Caco-2 (cell line): ENCODE measurements at regions of chr5 and their contacts with region 1.

Region 1: DNA sequence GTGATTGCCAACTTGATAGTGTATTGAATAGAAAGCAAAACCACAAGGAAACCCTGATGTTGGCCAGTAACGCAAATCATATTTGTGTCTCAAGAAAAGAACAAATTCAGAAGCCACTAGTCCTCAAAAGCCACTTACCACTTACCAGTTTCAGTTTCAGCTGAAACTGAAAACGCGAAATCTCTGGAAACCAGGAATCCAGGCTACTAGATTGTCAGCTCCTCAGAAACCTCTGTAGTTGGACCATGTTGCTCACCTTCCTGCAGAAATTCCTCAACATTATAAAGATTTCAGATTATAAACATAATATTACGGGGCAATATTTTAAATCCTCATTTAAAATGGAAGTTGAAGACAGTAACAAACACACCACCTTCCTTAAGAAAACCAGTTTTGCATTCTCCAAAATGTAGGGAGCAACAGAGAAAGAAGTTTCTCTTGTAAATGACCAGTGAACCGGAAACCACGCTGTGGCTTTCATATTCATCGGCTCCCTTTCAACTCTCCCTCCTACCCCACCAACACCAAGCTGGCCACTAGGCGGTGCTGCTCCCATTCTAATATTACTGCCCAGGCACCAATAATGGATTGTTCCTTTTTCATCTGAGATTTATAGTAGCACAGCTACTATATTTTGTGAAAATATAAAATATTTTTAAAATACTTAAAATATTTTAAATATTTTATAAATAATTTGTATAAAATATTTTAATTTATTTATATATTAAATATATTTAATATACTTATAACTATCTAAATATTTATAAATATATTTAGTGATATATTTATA is 8.7 kb upstream of the TMED7 start:
- DNase-seq: peak; percentile 83 to 86
- H3K4me3 ChIP-seq: 0 out of 2 replicates have a peak overlapping the region, but pooled peaks have one; percentile 2
- H3K4me3 Mint-ChIP-seq: peak overlapping the region; percentile 59
- H3K27ac Mint-ChIP-seq: no peak overlapping the region
- H3K4me1 ChIP-seq: no peaks in the 10 kb centered on the region
- H3K4me1 Mint-ChIP-seq: no peaks in the 10 kb centered on the region
- H3K27me3 ChIP-seq: no peaks in the 10 kb centered on the region; the same call in 1 of the 2 replicates
- H3K27me3 Mint-ChIP-seq: peaks cover 8% of the 10 kb centered on the region
- CTCF ChIP-seq: peak; percentile 92 to 94

Region 2: DNA sequence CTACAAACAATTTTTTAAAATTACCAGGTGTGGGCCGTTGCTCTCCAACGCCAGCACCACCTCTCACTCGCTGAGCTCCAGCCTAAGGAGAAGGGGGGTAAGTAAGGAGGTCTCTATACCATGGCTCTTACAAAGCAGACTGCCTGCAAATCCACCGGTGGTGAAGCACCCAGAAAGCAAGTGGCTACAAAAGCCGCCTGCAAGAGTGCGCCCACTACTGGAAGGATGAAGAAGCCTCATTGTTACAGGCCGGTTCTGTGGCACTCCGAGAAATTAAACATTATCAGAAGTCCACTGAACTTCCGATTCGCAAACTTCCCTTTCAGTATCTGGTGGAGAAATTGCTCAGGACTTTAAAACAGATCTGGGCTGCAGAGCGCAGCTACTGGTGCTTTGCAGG is 135.9 kb after region 1 on chr5:
- CTCF ChIA-PET with region 1: no interaction called
- POLR2A ChIA-PET with region 1: no interaction called
- intact Hi-C with region 1: loop called (anchors 2 kb)
- DNase-seq: peak in 1 of 2 experiments; percentile 4
- H3K4me3 ChIP-seq: no peak overlapping the region
- H3K4me3 Mint-ChIP-seq: no peak overlapping the region
- H3K27ac Mint-ChIP-seq: no peak overlapping the region
- H3K4me1 ChIP-seq: no peaks in the 10 kb centered on the region
- H3K4me1 Mint-ChIP-seq: no peaks in the 10 kb centered on the region
- H3K27me3 ChIP-seq: no peaks in the 10 kb centered on the region
- H3K27me3 Mint-ChIP-seq: peaks cover 4% of the 10 kb centered on the region
- CTCF ChIP-seq: peak in 1 of 2 experiments; percentile 52

Region 3: DNA sequence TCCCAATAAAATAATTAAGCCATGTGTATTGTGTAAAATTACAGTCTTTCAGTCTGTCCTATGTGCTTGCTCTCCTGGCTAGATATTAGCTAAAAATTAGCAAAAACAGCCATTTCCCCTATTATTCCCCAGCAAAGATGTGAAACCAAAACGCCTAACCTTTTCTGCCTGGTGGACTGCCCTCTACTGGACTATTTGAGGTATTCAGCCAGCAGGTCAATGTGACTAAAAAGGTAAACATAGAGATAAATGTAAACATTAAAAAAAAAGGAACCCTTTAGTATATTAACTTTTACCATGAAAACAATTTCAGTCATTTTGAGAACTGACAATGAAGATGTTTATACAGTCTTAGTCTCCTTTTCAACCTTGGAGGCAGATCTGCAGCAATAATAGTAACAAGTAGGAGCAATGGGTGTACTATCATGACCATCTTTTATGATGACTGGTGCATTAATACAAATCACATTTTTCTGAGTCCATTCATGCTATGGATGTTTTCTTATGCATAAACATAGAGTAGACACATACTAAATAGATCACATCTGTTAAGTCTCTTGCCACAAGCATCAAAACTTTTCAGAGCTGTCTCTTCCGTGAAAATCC is 196.7 kb after region 1 on chr5:
- CTCF ChIA-PET with region 1: interaction called, 7 read pairs
- POLR2A ChIA-PET with region 1: no interaction called
- intact Hi-C with region 1: loop called (anchors 1 kb)
- DNase-seq: peak in 1 of 2 experiments; percentile 51
- H3K4me3 ChIP-seq: no peak overlapping the region
- H3K4me3 Mint-ChIP-seq: no peak overlapping the region
- H3K27ac Mint-ChIP-seq: no peak overlapping the region
- H3K4me1 ChIP-seq: no peaks in the 10 kb centered on the region
- H3K4me1 Mint-ChIP-seq: peaks cover 6% of the 10 kb centered on the region
- H3K27me3 ChIP-seq: no peaks in the 10 kb centered on the region
- H3K27me3 Mint-ChIP-seq: no peaks in the 10 kb centered on the region
- CTCF ChIP-seq: peak; percentile 78 to 79

Region 4: GRCh38 chr5:115841382-115842088 is 207.0 kb after region 1 on chr5 and contains the starts of genes AP3S1 and ATG12:
- CTCF ChIA-PET with region 1: no interaction called
- POLR2A ChIA-PET with region 1: no interaction called
- intact Hi-C with region 1: loop called (anchors 1 kb)
- DNase-seq: peak; percentile 91 to 94
- H3K4me3 ChIP-seq: peak within 1 kb of the TSS; percentile 61
- H3K4me3 Mint-ChIP-seq: peak within 1 kb of the TSS; percentile 95
- H3K27ac Mint-ChIP-seq: peak within 1 kb of the TSS; percentile 97
- H3K4me1 ChIP-seq: peaks cover 41% of the 10 kb centered on the region
- H3K4me1 Mint-ChIP-seq: peaks cover 20% of the 10 kb centered on the region
- H3K27me3 ChIP-seq: no peaks in the 10 kb centered on the region
- H3K27me3 Mint-ChIP-seq: no peaks in the 10 kb centered on the region
- CTCF ChIP-seq: no peak
- total RNA-seq, gene AP3S1: 104 and 106 TPM in 2 replicates
- total RNA-seq, gene ATG12: 46.8 and 47.5 TPM in 2 replicates

Region 5: DNA sequence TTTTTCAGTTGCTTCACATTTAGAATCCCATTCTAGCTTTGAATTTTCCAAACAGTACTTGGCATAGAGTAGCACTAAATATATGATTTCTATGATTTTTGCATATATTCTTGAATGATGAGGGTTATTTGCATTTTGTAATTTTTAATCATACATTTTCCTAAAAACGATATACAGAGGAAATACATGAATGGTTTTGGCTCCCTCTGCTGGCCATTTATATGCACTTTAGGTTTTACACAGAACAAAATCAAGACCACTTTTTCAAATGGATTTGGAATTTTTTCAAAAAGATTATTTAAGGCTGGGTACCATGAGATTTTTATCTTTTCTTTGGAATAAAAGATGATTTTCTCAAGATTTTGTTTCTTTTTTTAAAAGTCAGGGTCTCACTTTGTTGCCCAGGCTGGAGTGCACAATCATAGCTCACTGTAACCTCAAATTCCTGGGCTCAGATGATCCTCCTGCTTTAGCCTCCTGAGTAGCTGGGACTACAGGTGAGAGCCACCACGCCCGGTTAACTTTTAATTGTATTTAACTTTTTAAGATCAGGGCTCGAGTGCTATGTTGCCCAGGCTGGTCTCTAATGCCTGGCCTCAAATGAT is 433.6 kb after region 1 on chr5:
- CTCF ChIA-PET with region 1: no interaction called
- POLR2A ChIA-PET with region 1: no interaction called
- intact Hi-C with region 1: loop called (anchors 1 kb)
- DNase-seq: peak in 1 of 2 experiments; percentile 19
- H3K4me3 ChIP-seq: no peak overlapping the region
- H3K4me3 Mint-ChIP-seq: no peak overlapping the region
- H3K27ac Mint-ChIP-seq: no peak overlapping the region
- H3K4me1 ChIP-seq: no peaks in the 10 kb centered on the region
- H3K4me1 Mint-ChIP-seq: no peaks in the 10 kb centered on the region
- H3K27me3 ChIP-seq: peaks cover 2% of the 10 kb centered on the region; the same call in 1 of the 2 replicates
- H3K27me3 Mint-ChIP-seq: peaks cover 13% of the 10 kb centered on the region
- CTCF ChIP-seq: peak; percentile 55 to 74